Adrenal gland (tissue), 19 donors: ENCODE measurements at regions of chr1 and their contacts with region 1.

Region 1: DNA sequence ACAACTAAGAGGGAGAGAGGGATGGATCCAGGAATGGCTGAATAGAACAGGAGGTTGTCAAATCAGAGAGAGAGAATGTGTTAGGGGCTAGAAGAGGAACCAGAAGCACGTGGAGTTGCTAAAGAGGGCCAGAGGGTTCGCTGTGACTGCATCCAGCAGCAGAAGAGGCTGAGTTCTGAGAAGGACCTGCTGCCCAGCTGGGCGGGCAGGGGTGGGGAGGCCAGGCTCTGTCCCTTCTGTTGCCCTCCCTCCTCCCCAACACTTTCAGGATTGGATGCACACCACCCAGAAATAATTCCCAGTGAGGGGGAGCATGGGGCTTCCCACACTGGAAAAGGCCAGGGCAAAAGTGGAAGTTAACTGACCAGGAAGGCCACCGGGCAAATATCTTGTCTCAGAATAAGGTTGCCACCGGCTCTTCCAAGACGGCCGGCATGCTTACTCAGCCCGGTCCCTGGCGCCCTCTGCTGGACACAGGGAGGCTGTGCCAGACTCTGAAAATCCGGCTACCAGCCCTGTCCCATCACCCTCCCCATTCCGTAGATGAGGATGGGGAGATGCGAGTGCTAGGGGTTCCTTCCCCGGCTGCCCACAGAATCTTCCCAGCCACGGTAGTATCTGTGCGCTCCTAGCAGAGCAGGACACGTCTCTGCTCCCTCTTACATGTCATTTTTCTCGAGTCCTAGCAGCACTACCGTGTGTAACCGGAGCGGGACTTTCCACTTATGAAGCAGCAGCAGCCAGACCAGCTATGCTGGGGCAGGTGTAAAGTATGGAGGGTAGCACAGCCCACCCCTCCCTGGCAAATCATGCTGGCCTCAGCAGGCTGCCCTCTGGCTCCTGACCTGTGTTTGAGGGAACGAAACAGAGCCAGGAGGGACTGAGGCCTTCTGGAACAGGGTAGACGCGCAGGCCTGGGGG is 46.8 kb upstream of the A3GALT2 start:
- DNase-seq: peak; percentile 83 to 94 (median 89)
- H3K4me3 ChIP-seq: no peak overlapping the region
- H3K27ac ChIP-seq: peak overlapping the region in 2 of 5 donors; percentile 49 to 60
- H3K4me1 ChIP-seq: peaks cover 3 to 20% of the 10 kb centered on the region in 2 donors
- H3K27me3 ChIP-seq: no peaks in the 10 kb centered on the region
- CTCF ChIP-seq: peak; percentile 87 to 99 (median 96)
- POLR2A ChIP-seq: no peak

Region 2: DNA sequence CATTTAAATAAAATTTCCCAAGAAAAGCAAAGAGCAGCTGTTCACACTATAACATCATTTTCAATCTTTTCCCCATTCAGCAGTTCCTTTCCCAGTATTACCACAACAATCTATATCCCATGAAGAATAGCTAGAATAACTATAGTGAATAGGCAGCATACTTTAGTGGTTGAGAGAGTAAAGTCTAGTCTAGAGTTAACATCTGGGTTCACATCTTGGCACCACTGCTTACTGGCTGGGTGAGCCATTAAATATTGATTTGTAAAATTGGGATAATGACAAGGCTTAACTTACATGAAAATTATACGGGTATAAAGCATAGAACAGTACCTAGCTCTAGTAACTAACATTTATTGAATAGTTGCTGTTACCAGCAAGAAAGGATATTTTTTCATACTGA is 535.9 kb before region 1 on chr1:
- intact Hi-C with region 1: no loop called
- DNase-seq: no peak
- H3K4me3 ChIP-seq: no peak overlapping the region
- H3K27ac ChIP-seq: no peak overlapping the region
- H3K4me1 ChIP-seq: peaks cover 12 to 13% of the 10 kb centered on the region in 2 donors
- H3K27me3 ChIP-seq: no peaks in the 10 kb centered on the region
- CTCF ChIP-seq: no peak
- POLR2A ChIP-seq: no peak

Region 3: DNA sequence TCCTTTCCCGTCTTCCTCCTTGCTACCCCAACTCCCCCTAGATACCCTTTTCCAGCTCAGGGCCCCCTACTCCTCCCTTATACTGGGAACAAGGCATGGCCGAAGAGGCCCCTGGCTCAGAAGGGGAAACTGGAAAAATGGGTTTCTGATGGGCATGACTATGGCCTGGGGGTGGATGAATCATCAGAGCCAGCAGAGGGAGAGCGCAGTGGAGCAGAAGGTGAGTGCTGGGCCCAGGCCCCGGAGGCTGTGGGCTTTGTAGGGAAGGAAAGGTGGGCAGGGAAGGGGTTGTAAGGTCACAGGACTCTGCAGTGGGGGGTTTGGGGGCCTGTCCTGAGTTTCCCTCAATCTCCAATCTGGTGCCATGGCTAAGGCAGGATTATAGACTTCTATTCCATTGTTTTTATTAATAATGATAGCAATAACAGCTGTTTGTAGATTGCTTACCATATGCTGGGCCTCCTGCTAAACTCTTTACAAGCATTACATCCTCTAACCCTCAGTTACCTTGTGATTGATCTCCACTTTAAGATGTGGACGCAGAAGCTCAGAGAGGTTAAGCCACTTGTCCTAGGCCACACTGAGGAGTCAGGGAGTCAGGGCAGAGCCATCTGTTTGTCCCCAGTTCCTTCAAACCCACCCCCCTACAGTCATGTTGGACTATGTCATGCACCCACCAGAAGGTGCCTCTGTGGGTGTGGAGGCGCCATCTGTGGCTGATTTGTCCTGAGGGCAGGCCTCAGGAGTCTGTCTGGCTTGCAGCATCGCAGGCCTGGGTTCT is 147.7 kb before region 1 on chr1:
- intact Hi-C with region 1: loop called (anchors 2 to 10 kb)
- DNase-seq: no peak
- H3K4me3 ChIP-seq: no peak overlapping the region
- H3K27ac ChIP-seq: peak overlapping the region in 1 of 5 donors; percentile 7
- H3K4me1 ChIP-seq: no peaks in the 10 kb centered on the region
- H3K27me3 ChIP-seq: no peaks in the 10 kb centered on the region
- CTCF ChIP-seq: no peak
- POLR2A ChIP-seq: no peak

Region 4: GRCh38 chr1:33228935-33229487 is 138.7 kb before region 1 on chr1:
- intact Hi-C with region 1: loop called in 1 of 2 experiments (anchors 10 kb)
- DNase-seq: peak; percentile 57 to 86 (median 82)
- H3K4me3 ChIP-seq: no peak overlapping the region
- H3K27ac ChIP-seq: peak overlapping the region in 1 of 5 donors; percentile 67
- H3K4me1 ChIP-seq: peaks cover 0 to 8% of the 10 kb centered on the region in 2 donors
- H3K27me3 ChIP-seq: no peaks in the 10 kb centered on the region
- CTCF ChIP-seq: no peak
- POLR2A ChIP-seq: no peak

Region 5: DNA sequence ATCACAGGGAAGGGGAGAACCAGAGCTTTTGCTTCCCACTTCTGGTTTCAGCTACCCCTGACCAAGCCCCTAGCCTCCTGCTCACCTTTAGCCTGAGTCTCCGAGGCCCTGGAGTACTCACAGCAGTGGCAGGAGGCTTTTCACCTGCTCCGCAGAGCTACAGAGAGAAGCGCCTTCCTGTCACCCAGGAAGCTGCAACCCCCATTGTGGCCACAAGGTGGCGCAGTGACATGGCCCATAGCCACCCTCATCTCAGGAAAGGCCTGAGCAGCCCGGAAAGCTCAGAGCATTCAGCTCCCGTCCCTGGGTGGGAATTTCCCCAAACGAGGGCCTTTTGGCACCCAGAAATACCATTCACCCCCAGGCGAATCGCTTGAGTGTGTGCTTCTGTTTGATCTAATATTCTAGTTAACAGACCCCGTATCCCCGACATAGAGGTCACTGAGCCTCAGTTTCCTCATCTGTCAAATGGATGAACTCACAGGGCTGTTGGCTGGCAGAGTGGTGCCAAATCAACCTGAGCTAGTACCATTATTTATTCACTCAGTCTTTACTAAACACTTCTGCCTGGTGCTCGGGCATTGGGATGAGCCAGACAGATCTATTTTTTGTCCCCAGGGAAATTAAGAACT is 72.2 kb before region 1 on chr1:
- intact Hi-C with region 1: loop called (anchors 2 kb)
- DNase-seq: peak; percentile 82 to 94 (median 87)
- H3K4me3 ChIP-seq: no peak overlapping the region
- H3K27ac ChIP-seq: peak overlapping the region in 2 of 5 donors; percentile 21 to 46
- H3K4me1 ChIP-seq: peaks cover 0 to 13% of the 10 kb centered on the region in 2 donors
- H3K27me3 ChIP-seq: no peaks in the 10 kb centered on the region
- CTCF ChIP-seq: peak; percentile 94 to 99 (median 96)
- POLR2A ChIP-seq: no peak

Region 6: GRCh38 chr1:33446590-33446989 is 78.8 kb after region 1 on chr1:
- intact Hi-C with region 1: loop called in 1 of 2 experiments (anchors 5 kb)
- DNase-seq: peak in 2 of 7 donors; percentile 45 to 54
- H3K4me3 ChIP-seq: no peak overlapping the region
- H3K27ac ChIP-seq: no peak overlapping the region
- H3K4me1 ChIP-seq: peaks cover 18 to 31% of the 10 kb centered on the region in 2 donors
- H3K27me3 ChIP-seq: no peaks in the 10 kb centered on the region
- CTCF ChIP-seq: no peak
- POLR2A ChIP-seq: no peak

Region 7: DNA sequence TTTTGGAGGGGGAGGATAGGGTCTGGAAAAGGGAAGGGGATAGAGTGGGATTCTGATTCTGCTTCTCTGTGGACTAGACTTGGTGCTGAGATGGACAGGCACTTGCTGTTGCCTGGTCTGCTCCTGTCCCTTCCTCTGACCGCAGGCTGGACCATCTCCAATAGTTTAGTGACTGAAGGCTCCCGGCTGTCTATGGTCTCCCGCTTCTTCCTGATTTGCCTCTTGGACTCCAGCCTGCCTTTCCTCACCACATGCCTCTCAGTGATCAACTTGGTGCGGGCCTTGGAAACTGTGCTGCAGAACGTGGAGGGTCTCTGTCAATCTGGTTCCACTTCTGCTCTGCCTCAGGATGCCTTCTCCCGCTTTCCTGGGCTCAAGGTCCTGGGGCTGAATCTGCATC is 98.4 kb after region 1 on chr1:
- intact Hi-C with region 1: loop called (anchors 5 kb)
- DNase-seq: peak in 5 of 7 donors; percentile 50 to 73 (median 56)
- H3K4me3 ChIP-seq: no peak overlapping the region
- H3K27ac ChIP-seq: no peak overlapping the region
- H3K4me1 ChIP-seq: peaks cover 0 to 19% of the 10 kb centered on the region in 2 donors
- H3K27me3 ChIP-seq: no peaks in the 10 kb centered on the region
- CTCF ChIP-seq: no peak
- POLR2A ChIP-seq: no peak